ENCODE measurements at regions of chr20 and their contacts with region 1.

Region 1: DNA sequence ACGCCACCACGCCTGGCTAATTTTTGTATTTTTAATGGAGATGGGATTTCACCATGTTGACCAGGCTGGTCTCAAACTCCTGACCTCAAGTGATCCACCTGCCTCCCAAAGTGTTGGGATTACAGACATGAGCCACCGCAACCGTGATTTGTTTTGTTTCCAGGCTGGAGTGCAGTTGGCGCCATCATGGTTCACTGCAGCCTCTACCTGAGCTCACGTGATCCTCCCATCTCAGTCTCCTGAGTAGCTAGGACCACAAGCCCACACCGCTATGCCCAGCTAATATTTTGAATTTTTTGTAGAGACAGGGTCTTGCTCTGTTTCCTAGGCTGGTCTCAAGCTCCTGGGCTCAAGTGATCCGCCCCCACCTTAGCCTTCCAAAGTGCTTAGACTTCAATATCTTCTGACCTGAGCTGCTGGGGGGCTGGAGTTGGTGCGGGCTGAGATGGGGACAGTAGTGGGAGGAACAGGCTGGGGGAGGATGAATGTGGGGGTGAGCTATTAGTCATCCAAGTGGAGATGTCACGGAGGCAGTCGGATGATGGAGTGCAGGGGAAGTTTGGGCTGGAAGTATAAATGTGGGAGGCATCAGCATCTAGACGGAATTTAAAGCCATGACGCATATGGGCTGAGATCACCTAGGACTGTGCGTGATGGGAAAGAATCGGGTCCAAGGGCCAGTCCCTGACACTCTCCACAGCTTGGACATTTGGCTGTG is 23.1 kb upstream of the ZMYND8 start:
- DNase-seq: no peak
- ATAC-seq: no peak
- H3K4me3 Mint-ChIP-seq: no peak overlapping the region
- H3K27ac Mint-ChIP-seq: peak overlapping the region; percentile 55
- H3K4me1 Mint-ChIP-seq: peaks cover 37% of the 10 kb centered on the region
- H3K27me3 Mint-ChIP-seq: no peaks in the 10 kb centered on the region

Region 2: GRCh38 chr20:47220161-47220582 is 159.4 kb before region 1 on chr20:
- CTCF ChIA-PET with region 1: interaction called, 31 read pairs
- DNase-seq: peak; percentile 64
- ATAC-seq: no peak
- H3K4me3 Mint-ChIP-seq: no peak overlapping the region
- H3K27ac Mint-ChIP-seq: peak overlapping the region; percentile 42
- H3K4me1 Mint-ChIP-seq: peaks cover 8% of the 10 kb centered on the region
- H3K27me3 Mint-ChIP-seq: no peaks in the 10 kb centered on the region

Region 3: DNA sequence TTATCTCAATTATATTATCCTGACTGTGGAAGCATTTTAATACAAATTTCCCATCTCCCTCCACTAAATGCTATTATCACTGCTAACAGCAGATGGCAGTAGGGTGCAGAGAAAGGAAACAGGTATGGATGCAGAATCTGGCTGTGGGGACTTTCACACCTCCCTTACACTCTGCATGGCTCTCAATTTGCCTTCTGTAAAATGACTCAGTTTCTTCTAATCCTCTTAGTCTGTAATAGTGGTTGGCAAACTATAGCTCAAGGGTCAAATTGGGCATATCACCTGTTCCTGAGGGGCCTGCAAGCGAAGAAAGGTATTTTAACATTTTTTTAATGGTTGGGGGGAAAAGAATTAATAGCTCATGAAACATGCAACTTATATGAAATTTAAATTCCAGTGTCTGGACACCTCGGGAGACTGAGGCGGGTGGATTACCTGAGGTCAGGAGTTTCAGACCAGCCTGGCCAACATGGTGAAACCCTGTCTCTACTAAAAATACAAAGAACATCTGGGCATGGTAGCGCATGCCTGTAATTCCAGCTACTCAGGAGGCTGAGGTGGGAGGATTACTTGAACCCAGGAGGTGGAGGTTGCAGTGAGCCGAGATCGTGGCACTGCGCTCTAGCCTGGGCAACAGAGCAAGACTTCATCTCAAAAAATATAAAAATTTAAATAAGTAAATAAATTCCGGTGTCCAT is 106.5 kb before region 1 on chr20:
- CTCF ChIA-PET with region 1: interaction called, 384 read pairs
- DNase-seq: peak; percentile 62
- ATAC-seq: peak; percentile 54
- H3K4me3 Mint-ChIP-seq: no peak overlapping the region
- H3K27ac Mint-ChIP-seq: no peak overlapping the region
- H3K4me1 Mint-ChIP-seq: peaks cover 42% of the 10 kb centered on the region
- H3K27me3 Mint-ChIP-seq: no peaks in the 10 kb centered on the region

Region 4: DNA sequence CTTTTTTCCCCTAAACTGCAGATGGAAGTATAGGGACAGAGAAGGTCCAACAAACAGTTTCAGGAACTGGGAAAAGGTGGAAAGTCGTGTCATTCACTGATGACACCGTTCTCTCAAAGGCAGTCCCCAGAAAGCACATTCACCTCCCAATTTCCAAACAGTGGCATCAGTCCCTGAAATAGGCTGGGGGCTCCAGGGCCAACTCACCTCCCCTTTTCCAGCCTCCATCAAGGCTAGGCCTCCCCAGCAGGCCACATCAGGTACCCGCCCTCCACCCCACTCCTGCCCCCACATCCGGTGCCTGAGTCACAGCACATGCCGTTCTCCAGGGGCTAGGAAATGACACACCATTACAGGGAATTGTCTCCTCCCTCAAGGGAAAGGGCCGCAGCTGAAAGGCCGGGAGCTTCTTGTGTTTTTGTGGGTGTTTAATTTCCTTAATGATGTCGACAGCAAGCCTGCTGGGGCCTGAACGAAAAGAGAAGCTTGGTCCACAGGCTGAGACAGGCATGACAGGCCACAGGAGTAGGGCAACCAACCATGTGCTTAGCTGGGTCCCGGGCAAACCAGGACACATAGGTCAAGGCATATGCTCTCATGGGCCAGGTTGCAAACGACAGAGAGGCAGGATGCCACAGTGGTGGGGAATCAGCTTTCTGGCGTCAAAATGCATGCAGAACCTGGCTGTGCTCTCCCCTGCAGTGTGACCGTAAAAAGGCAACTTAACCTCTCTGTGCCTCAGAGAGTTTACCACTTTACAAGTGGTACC is 62.3 kb before region 1 on chr20:
- CTCF ChIA-PET with region 1: interaction called, 30 read pairs
- DNase-seq: peak; percentile 72
- ATAC-seq: peak; percentile 72
- H3K4me3 Mint-ChIP-seq: no peak overlapping the region
- H3K27ac Mint-ChIP-seq: peak overlapping the region; percentile 86
- H3K4me1 Mint-ChIP-seq: peaks cover 50% of the 10 kb centered on the region
- H3K27me3 Mint-ChIP-seq: no peaks in the 10 kb centered on the region

Region 5: GRCh38 chr20:47397652-47398301 is 18.2 kb after region 1 on chr20:
- CTCF ChIA-PET with region 1: interaction called, 22 read pairs
- DNase-seq: no peak
- ATAC-seq: peak; percentile 23
- H3K4me3 Mint-ChIP-seq: no peak overlapping the region
- H3K27ac Mint-ChIP-seq: peak overlapping the region; percentile 17
- H3K4me1 Mint-ChIP-seq: peaks cover 9% of the 10 kb centered on the region
- H3K27me3 Mint-ChIP-seq: no peaks in the 10 kb centered on the region

Region 6: DNA sequence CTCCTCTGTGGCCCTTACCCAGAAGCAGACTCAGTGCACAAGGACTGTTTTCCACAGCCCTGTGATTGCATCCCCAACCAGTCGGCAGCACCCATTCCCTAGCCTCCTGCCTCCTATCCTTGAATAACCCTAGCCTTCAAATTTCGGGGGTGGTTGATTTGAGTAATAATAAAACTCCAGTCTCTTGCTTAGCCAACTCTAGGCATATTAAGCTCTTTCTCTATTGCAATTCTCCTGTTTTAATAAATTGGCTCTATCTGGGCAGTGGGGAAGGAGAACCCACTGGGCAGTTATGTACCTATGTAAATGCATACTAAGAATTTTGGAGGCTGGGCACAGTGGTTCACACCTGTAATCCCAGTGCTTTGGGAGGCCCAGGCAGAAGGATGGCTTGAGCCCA is 47.5 kb after region 1 on chr20:
- CTCF ChIA-PET with region 1: no interaction called
- DNase-seq: no peak
- ATAC-seq: no peak
- H3K4me3 Mint-ChIP-seq: no peak overlapping the region
- H3K27ac Mint-ChIP-seq: no peak overlapping the region
- H3K4me1 Mint-ChIP-seq: no peaks in the 10 kb centered on the region
- H3K27me3 Mint-ChIP-seq: no peaks in the 10 kb centered on the region

Region 7: DNA sequence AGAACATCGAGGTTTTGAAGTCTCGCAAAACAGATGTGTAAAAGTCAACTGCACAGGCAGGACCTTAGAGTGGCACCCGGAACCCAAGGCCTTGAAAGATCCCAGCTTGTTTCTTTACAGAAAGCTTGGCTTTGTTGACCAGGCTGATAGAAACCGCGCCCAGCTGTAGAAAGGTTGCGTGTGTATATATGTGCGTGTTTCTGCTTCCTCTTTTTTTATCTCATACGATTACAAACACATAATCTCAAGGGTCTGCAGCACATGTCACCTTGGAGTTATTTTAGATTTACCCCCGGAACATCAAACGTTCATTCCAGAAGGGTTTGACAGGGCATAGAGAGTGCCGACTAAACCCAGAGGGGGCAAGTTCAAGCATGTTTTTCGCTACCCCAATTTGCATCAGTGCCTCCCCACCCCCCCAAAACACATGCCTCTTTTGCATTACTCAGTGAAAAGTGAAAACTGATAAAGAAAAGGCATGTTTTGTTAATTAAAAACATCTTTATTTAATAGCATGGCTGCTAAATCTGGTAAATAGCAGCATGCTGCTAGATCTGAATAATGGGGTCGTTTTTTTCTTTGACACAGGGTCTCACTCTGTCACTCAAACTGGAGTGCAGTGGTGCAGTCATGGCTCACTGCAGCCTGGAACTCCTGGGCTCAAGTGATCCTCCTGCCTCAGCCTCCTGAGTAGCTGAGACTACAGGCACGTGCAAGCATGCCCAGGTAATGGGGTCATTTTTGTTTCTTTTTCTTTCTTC is 88.9 kb after region 1 on chr20:
- CTCF ChIA-PET with region 1: no interaction called
- DNase-seq: no peak
- ATAC-seq: no peak
- H3K4me3 Mint-ChIP-seq: no peak overlapping the region
- H3K27ac Mint-ChIP-seq: no peak overlapping the region
- H3K4me1 Mint-ChIP-seq: peaks cover 11% of the 10 kb centered on the region
- H3K27me3 Mint-ChIP-seq: no peaks in the 10 kb centered on the region

Region 8: DNA sequence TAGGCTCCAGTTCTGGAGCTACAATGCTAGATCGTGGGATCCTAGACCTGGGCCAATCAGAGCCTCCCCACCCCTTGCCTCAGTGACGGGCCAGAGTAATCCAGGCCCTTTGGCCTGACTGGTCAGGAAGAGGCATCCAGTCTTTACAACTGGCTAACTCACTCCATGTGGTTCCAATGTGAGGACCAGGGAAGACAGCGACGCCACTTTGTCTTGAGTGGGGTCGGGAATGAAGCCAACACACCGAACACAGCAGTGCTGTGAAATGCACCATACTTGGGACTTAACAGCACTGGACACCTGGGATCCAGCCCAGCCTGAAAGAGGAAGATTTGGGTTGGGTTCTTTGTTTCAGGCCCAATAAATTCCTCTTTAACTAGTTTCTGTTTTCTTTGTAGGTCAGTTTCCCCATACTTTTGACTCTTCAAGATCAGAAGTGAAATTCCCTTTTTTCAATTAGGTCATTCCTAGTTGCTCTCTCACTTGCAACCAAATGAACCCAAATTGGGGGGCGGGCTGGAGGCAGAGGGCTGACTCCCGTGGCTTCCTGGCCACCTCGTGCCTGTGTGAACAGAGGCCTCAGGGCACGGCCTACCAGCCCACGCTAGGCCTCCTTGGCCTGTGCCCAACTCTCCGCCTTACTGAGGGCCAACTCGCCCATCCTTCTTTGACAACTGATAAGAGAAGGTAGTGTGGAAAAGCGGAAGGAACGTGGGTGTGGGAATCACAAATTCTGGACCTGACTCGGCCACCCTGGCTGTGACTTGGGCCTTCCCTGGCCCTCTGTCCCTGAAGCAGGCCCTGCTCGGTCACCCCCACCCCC is 388.6 kb after region 1 on chr20:
- CTCF ChIA-PET with region 1: no interaction called
- DNase-seq: no peak
- ATAC-seq: no peak
- H3K4me3 Mint-ChIP-seq: no peak overlapping the region
- H3K27ac Mint-ChIP-seq: no peak overlapping the region
- H3K4me1 Mint-ChIP-seq: no peaks in the 10 kb centered on the region
- H3K27me3 Mint-ChIP-seq: peaks cover 22% of the 10 kb centered on the region